ENCODE measurements at regions of chr6 and their contacts with region 1.

Region 1: DNA sequence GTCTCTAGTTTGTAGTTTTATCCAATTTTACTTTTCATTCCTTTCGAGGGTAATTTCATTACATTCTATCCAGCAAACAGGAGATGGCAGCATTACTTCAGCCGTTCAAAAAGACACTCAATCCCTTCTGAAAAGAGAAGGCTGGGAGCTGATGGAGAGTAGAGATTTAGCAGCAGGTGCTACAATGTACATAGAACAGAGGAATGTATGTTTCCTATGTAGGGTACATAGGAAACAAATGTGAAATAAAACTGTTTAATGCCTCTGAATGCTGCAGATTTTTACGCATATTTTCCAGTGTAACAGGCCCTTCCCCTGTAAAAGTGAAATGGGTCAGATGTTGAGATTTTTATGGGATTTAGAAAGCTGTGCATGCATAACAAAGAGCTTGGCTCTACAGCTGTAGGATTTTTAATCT is 16.0 kb downstream of the RPS12 start:
- DNase-seq: peak in 1 of 10 donors; percentile 21

Region 2: GRCh38 chr6:132888701-132889100 is 58.4 kb after region 1 on chr6:
- intact Hi-C with region 1: no loop called
- DNase-seq: no peak

Region 3: GRCh38 chr6:133184798-133185372 is 354.5 kb after region 1 on chr6:
- intact Hi-C with region 1: loop called (anchors 10 kb)
- DNase-seq: no peak

Region 4: DNA sequence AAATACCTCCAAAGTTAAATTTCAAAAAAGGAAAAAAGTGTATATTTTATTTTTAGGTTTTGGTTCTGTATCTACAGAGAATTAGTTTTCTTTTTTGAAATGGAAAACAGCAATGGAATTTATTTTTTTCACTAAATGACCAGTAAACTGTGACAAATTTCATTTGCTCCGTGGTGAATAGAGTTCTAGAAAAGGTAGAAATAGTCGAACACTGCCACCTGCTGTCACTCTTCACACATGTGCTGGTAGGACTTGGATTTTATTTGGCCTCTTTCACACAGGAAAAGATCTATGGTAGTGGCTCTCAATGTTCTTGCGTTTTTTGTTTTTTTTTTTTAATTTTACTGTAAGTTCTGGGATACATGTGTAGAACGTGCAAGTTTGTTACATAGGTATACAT is 723.3 kb after region 1 on chr6:
- intact Hi-C with region 1: loop called (anchors 1 kb)
- DNase-seq: peak in 4 of 10 donors; percentile 17 to 30 (median 26)

Measured in posterior cingulate gyrus (tissue), 11 donors.